ENCODE measurements at regions of chr10 and their contacts with region 1.

Region 1: DNA sequence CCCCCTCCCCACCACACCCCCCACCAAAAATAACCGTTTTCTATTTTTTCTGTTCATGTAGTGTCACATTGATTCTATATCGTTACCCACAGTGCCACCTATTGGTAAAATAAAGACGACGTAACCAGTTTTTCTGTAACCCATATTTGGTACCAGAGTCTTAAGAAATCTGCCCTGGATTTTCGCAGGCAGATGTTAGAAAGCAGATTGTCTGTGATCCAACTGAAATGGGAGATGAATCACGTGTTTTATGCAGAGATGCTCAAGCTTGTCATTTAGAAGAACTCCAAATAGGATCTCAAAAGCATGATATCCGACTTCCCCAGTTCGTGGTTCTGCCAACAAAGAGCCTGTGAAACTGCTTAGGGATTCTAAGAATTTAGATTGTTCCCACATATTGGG is 261.1 kb upstream of the CSTF2T start:
- DNase-seq: peak; percentile 34
- H3K4me3 ChIP-seq: peak overlapping the region in 1 of 2 experiments; percentile 27; a peak in 1 of 4 replicates
- H3K27ac ChIP-seq: peak overlapping the region in 1 of 2 experiments; percentile 22; a peak in 2 of 4 replicates
- H3K4me1 ChIP-seq: no peaks in the 10 kb centered on the region; a peak in 1 of 4 replicates
- H3K27me3 ChIP-seq: no peaks in the 10 kb centered on the region
- CTCF ChIP-seq: peak; percentile 71
- EP300 ChIP-seq: peak in 1 of 2 experiments; percentile 9; a peak in 1 of 4 replicates
- RAD21 ChIP-seq: peak; percentile 86

Region 2: GRCh38 chr10:51980752-51981151 is 20.3 kb after region 1 on chr10:
- CTCF ChIA-PET with region 1: no interaction called
- POLR2A ChIA-PET with region 1: no interaction called
- DNase-seq: no peak
- H3K4me3 ChIP-seq: no peak overlapping the region
- H3K27ac ChIP-seq: no peak overlapping the region
- H3K4me1 ChIP-seq: no peaks in the 10 kb centered on the region; a peak in 1 of 4 replicates
- H3K27me3 ChIP-seq: no peaks in the 10 kb centered on the region
- CTCF ChIP-seq: no peak
- EP300 ChIP-seq: no peak
- RAD21 ChIP-seq: no peak

Region 3: GRCh38 chr10:52215745-52216361 is 255.4 kb after region 1 on chr10:
- CTCF ChIA-PET with region 1: interaction called, 15 read pairs
- POLR2A ChIA-PET with region 1: no interaction called
- DNase-seq: peak; percentile 32
- H3K4me3 ChIP-seq: peak overlapping the region in 1 of 2 experiments; percentile 10; a peak in 1 of 4 replicates
- H3K27ac ChIP-seq: peak overlapping the region in 1 of 2 experiments; percentile 69; a peak in 3 of 4 replicates
- H3K4me1 ChIP-seq: peaks cover 6 to 8% of the 10 kb centered on the region in 2 experiments
- H3K27me3 ChIP-seq: no peaks in the 10 kb centered on the region
- CTCF ChIP-seq: peak; percentile 83
- EP300 ChIP-seq: no peak
- RAD21 ChIP-seq: peak; percentile 93

Measured in SK-N-SH (cell line).